Posterior vena cava (tissue), 2 donors: ENCODE measurements at regions of chr13 and their contacts with region 1.

Region 1: GRCh38 chr13:58977085-58977484 is 1186.6 kb downstream of the DIAPH3 start:
- DNase-seq: no peak

Region 2: DNA sequence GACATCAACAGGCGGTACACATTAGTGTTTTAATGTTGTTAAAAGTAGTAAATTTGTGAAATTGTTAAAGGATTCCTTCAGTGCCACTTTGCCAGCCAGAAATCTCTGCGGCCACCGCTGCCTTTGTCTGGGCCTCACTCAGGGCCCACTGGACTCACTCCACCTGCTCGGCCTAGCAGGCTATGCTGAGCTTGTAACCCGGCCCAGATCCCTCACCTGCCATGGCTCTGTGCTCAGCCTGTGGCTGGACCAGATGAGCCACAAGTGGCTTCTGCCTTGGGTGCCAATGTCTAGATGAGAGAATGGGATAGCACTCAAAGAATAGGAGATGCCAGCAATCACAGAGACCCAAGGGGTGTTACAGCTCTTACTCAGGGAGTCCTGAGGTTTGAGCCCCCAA is 41.4 kb before region 1 on chr13:
- intact Hi-C with region 1: loop called in 1 of 2 experiments (anchors 1 kb)
- DNase-seq: no peak